Colonic mucosa (tissue), 4 donors: ENCODE measurements at regions of chr6 and their contacts with region 1.

Region 1: GRCh38 chr6:73566954-73567591 is 46.2 kb upstream of the EEF1A1 start:
- DNase-seq: peak; percentile 93
- H3K4me3 ChIP-seq: no peak overlapping the region
- H3K27ac ChIP-seq: peak overlapping the region; percentile 46
- H3K4me1 ChIP-seq: no peaks in the 10 kb centered on the region
- H3K27me3 ChIP-seq: no peaks in the 10 kb centered on the region
- CTCF ChIP-seq: no peak

Region 2: DNA sequence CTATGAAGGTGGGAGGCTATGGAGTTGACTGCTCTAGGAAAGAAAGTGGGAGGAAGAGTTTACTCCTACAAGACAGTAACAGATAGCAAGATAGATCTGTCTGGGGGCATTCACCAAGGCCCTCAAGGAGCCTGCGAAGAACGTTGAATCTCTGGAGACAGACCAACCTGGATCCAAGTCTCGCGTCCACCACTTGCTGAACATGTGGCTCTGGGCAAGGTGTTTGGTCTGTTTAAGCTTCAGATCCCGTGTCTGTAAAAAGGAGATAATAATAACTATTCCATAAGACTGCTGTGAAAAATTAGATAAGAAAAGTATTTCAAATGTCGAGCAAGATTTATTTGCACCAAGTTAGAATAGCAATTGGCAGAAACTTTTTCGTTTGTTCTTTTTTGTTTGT is 38.2 kb before region 1 on chr6:
- intact Hi-C with region 1: loop called (anchors 5 kb)
- DNase-seq: no peak
- H3K4me3 ChIP-seq: no peak overlapping the region
- H3K27ac ChIP-seq: no peak overlapping the region
- H3K4me1 ChIP-seq: no peaks in the 10 kb centered on the region
- H3K27me3 ChIP-seq: no peaks in the 10 kb centered on the region
- CTCF ChIP-seq: no peak

Region 3: GRCh38 chr6:73665686-73666319 is 98.7 kb after region 1 on chr6:
- intact Hi-C with region 1: no loop called
- DNase-seq: no peak
- H3K4me3 ChIP-seq: no peak overlapping the region
- H3K27ac ChIP-seq: peak overlapping the region; percentile 10
- H3K4me1 ChIP-seq: no peaks in the 10 kb centered on the region
- H3K27me3 ChIP-seq: no peaks in the 10 kb centered on the region
- CTCF ChIP-seq: no peak

Region 4: GRCh38 chr6:74505391-74505790 is 938.3 kb after region 1 on chr6:
- intact Hi-C with region 1: no loop called
- DNase-seq: no peak
- H3K4me3 ChIP-seq: no peak overlapping the region
- H3K27ac ChIP-seq: no peak overlapping the region
- H3K4me1 ChIP-seq: no peaks in the 10 kb centered on the region
- H3K27me3 ChIP-seq: no peaks in the 10 kb centered on the region
- CTCF ChIP-seq: no peak